AG04449 (cell line): ENCODE measurements at regions of chr17 and their contacts with region 1.

Region 1: DNA sequence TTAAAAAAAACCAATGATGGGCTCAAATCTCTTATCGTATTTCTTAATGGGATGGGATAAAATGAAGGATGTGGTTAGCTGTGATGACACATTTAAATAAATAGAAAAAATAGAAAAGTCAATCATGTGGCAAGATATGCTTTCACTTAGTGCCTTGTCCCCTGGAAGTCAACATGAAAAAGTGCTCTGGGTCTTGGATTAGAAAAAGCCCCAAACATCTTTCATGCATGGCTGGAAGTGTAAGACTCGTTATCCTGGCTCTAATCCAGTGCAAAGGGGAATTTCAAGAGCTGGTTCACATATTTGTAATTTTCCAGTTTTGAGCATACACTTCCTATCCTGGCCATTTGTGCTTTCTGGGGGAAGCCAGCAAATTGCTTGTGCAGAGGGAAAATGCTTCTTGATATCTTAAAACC is 160.9 kb downstream of the MAP2K6 start:
- DNase-seq: peak; percentile 73
- H3K4me3 ChIP-seq: no peak overlapping the region
- CTCF ChIP-seq: no peak

Region 2: DNA sequence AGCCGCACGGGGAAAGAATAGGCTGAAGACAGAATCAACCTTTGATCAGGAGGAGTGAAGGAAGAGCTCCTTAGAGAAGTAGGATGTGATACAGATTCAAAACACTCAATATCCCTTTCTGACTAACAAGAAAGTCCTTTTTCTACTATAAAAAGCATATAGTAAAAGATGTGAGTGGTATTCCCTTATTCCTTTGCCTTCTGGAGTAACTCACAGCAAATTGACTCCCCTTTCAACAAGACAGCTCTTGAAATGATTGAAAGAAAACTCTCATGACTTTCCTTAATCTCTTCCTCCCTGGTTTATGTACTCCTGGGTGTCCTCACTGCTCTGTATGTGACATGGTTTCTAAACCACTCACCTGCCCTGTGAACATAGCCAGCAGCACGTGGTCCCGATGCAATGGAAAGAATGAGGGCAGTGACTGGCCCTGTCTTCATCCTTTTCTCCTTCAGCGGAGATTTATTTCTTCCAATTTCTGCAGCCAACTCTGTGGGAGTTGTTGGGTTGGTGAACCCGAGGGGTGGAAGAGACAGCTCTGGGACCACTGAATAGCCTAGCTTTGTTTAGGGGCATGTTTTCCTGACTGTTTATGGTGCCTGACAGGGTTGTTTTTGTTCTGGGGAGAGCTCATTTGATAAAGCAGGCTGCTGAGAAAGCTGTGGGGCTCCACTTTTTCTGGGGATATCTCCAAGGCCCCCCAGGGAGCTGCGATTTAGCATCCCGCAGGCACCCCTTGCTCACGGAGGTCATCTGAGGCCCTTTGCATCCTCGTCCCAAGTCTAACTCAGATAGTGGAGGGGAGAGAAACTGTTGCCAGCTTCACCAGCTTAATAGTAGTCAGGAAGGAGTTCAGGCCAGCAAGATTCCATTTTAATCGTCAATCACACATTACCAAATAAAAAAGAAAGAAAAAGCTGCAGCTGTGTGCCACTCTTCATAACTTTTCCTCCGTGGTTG is 114.1 kb before region 1 on chr17:
- CTCF ChIA-PET with region 1: no interaction called
- POLR2A ChIA-PET with region 1: no interaction called
- DNase-seq: no peak
- H3K4me3 ChIP-seq: no peak overlapping the region
- CTCF ChIP-seq: no peak

Region 3: DNA sequence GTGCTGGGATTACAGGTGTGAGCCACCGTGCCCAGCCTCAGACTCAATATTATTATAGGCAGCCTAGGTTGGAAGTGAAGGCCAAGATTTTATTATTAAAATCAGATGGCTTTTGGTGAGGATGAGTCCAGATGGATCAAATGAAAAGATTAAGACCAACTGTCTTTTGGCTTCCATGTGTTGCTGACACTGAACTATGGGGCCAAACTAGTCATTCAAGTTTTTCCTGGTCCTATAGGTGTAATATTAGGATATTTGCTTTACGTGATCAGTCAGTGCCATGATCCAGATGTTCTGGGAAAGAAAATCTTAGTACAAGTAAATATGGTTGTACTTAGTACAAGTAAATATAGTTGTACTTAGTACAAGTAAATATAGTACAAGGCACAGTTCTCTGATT is 20.3 kb before region 1 on chr17:
- CTCF ChIA-PET with region 1: no interaction called
- POLR2A ChIA-PET with region 1: no interaction called
- DNase-seq: no peak
- H3K4me3 ChIP-seq: no peak overlapping the region
- CTCF ChIP-seq: no peak

Region 4: DNA sequence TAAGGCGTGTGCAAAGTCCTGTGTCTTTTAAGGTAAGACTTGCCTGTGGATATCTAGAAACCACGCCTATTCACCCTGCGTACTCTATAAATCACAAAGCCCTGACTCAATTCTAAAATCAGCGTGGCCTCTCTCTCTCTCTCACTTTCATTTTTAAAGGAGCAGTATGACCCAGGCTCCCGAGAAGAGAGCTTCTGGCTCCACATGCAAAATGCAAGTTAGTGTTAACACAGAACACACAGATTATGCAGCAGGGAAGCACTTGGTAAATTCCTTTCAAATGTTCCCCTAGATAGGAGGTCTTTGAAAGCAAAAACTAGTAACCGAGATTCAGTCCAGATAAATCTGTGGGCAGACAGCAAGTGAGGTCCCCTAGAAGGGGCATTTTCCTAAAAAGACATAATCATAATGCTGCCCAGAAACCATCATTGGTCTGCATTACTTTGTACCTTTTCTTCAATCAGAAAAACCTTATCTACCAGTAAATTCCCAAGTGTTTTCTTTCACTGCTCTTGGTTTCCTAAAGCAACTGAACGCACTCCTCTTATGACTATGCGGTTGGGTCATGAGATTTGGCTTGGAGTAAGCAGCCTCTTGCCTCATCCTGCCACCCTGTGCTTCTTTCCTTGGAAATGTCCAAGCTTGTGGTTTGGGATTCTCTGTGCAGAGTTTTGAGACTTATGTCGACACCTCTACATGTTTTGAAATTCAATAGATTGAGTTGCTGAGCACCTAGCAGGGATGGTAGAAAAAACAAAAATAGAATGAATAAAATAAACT is 562.3 kb after region 1 on chr17:
- CTCF ChIA-PET with region 1: interaction called, 14 read pairs
- POLR2A ChIA-PET with region 1: no interaction called
- DNase-seq: peak; percentile 23
- H3K4me3 ChIP-seq: no peak overlapping the region; the same call in 1 of the 2 replicates
- CTCF ChIP-seq: no peak

Region 5: GRCh38 chr17:70144260-70144846 is 569.0 kb after region 1 on chr17:
- CTCF ChIA-PET with region 1: interaction called, 18 read pairs
- POLR2A ChIA-PET with region 1: no interaction called
- DNase-seq: no peak
- H3K4me3 ChIP-seq: no peak overlapping the region
- CTCF ChIP-seq: peak; percentile 24